CD8-positive, alpha-beta T cell (primary cell): ENCODE measurements at regions of chr19 and their contacts with region 1.

Region 1: GRCh38 chr19:43765109-43765876 is 10.5 kb upstream of the SMG9 start:
- DNase-seq: peak in 8 of 9 experiments; percentile 51 to 85 (median 72)
- ATAC-seq: peak; percentile 84
- H3K4me3 ChIP-seq: no peak overlapping the region
- H3K4me3 Mint-ChIP-seq: peak overlapping the region; percentile 58
- H3K27ac ChIP-seq: peak overlapping the region; percentile 24 to 77
- H3K27ac Mint-ChIP-seq: peak overlapping the region; percentile 90
- H3K4me1 ChIP-seq: peaks cover 30% of the 10 kb centered on the region
- H3K4me1 Mint-ChIP-seq: peaks cover 31% of the 10 kb centered on the region
- H3K27me3 ChIP-seq: no peaks in the 10 kb centered on the region
- H3K27me3 Mint-ChIP-seq: no peaks in the 10 kb centered on the region
- CTCF ChIP-seq: no peak

Region 2: GRCh38 chr19:43639519-43640423 is 125.5 kb before region 1 on chr19 and contains the start of gene CADM4:
- CTCF ChIA-PET with region 1: no interaction called
- POLR2A ChIA-PET with region 1: no interaction called
- intact Hi-C with region 1: no loop called
- DNase-seq: peak in 8 of 9 experiments; percentile 28 to 72 (median 53)
- ATAC-seq: peak; percentile 87
- H3K4me3 ChIP-seq: peak within 1 kb of the TSS; percentile 49 to 62
- H3K4me3 Mint-ChIP-seq: peak within 1 kb of the TSS; percentile 85
- H3K27ac ChIP-seq: no peak within 1 kb of the TSS
- H3K27ac Mint-ChIP-seq: no peak within 1 kb of the TSS
- H3K4me1 ChIP-seq: peaks cover 11% of the 10 kb centered on the region
- H3K4me1 Mint-ChIP-seq: peaks cover 16% of the 10 kb centered on the region
- H3K27me3 ChIP-seq: peaks cover 9 to 19% of the 10 kb centered on the region in 2 experiments
- H3K27me3 Mint-ChIP-seq: peaks cover 33% of the 10 kb centered on the region
- CTCF ChIP-seq: no peak
- total RNA-seq, gene CADM4: 0.19 TPM in 1 of 2 experiments, not detected in the other

Region 3: GRCh38 chr19:43651758-43652545 is 113.3 kb before region 1 on chr19:
- CTCF ChIA-PET with region 1: no interaction called
- POLR2A ChIA-PET with region 1: no interaction called
- intact Hi-C with region 1: no loop called
- DNase-seq: peak in 7 of 9 experiments; percentile 9 to 67 (median 33)
- ATAC-seq: no peak
- H3K4me3 ChIP-seq: no peak overlapping the region
- H3K4me3 Mint-ChIP-seq: no peak overlapping the region
- H3K27ac ChIP-seq: no peak overlapping the region
- H3K27ac Mint-ChIP-seq: no peak overlapping the region
- H3K4me1 ChIP-seq: no peaks in the 10 kb centered on the region
- H3K4me1 Mint-ChIP-seq: no peaks in the 10 kb centered on the region
- H3K27me3 ChIP-seq: no peaks in the 10 kb centered on the region
- H3K27me3 Mint-ChIP-seq: no peaks in the 10 kb centered on the region
- CTCF ChIP-seq: peak; percentile 39

Region 4: GRCh38 chr19:43784981-43785808 is 19.9 kb after region 1 on chr19:
- CTCF ChIA-PET with region 1: interaction called, 52 read pairs
- POLR2A ChIA-PET with region 1: interaction called, 5 read pairs
- intact Hi-C with region 1: loop called (anchors 1 kb)
- DNase-seq: peak in 8 of 9 experiments; percentile 27 to 82 (median 52)
- ATAC-seq: peak; percentile 38
- H3K4me3 ChIP-seq: no peak overlapping the region
- H3K4me3 Mint-ChIP-seq: peak overlapping the region; percentile 56
- H3K27ac ChIP-seq: peak overlapping the region; percentile 25 to 54
- H3K27ac Mint-ChIP-seq: peak overlapping the region; percentile 96
- H3K4me1 ChIP-seq: peaks cover 36% of the 10 kb centered on the region
- H3K4me1 Mint-ChIP-seq: peaks cover 40% of the 10 kb centered on the region
- H3K27me3 ChIP-seq: peaks cover 0 to 4% of the 10 kb centered on the region in 2 experiments
- H3K27me3 Mint-ChIP-seq: peaks cover 9% of the 10 kb centered on the region
- CTCF ChIP-seq: peak; percentile 94